ENCODE measurements at regions of chr19 and their contacts with region 1.

Region 1: DNA sequence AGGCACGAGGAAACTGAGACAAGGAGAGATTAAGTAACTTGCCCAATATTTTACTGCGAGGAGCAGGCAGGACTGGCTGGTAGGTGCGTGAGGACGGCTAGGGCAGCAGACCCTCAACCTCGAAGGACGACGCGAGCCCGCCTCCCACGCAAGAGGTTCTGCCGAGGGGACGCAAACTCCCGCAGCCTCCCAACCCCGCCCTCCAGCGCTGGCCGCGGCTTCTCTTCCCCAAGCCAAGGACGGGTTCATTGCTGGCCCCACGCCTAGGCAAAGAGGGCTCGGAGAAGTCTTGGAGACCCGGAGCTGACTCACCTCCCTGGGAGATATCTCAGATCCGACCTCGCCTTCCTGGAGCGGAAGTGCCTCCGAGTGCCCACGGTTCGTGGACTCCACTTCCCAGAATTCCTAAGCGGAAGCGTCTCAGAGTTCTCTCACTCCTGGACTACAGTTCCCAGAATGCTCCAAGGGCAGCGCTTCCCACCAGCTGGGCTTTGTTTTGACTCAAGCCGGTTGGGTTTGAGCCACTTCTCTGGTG is at the start of gene ZNF235:
- DNase-seq: peak; percentile 89 to 96 (median 92)
- ATAC-seq: peak; percentile 99 to 100 (median 100)
- H3K4me3 ChIP-seq: peak within 1 kb of the TSS; percentile 34 to 91 (median 72)
- H3K27ac ChIP-seq: peak within 1 kb of the TSS in 11 of 12 donors; percentile 48 to 87 (median 74)
- H3K4me1 ChIP-seq: peaks cover 0 to 18% (median 9%) of the 10 kb centered on the region in 12 donors
- H3K27me3 ChIP-seq: no peaks in the 10 kb centered on the region
- CTCF ChIP-seq: no peak
- POLR2A ChIP-seq: peak in 1 of 2 donors; percentile 64
- total RNA-seq, gene ZNF235: 1.9 to 6.3 (median 4.1) TPM

Region 2: DNA sequence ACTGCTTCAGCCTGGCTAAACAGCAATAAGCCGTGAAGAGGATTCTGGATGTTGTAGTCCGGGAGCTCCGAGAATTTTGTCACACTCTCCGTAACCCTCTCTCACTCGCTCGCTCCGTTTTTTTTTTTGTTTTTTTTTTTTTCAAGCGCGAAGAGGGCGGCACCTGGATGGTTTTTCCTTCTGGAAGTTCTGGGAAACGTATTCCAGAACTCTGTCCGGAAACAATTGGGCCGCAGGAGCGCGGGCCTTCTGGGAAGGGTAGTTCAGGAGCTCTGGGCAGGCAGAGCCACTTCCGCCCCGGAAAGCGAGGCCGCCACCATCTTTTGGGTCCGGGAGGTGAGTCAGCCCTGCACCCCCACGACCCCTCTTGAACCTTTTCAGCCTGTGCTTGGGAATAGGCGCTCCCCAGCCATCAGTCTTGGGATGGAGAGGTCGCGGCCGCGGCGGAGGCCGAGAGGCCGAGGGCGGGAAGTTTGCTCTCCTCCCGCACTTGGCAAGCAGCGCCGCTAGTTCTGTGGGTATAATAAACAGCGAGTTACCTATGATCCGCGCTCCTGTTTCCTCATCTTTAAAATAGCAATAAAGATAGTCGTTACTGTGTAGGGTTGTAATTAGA is 92.4 kb before region 1 on chr19 and contains the start of gene ZNF227:
- intact Hi-C with region 1: loop called in 3 of 10 experiments (anchors 2 to 10 kb)
- DNase-seq: peak; percentile 92 to 96 (median 95)
- ATAC-seq: peak; percentile 96 to 98 (median 98)
- H3K4me3 ChIP-seq: peak within 1 kb of the TSS; percentile 47 to 95 (median 76)
- H3K27ac ChIP-seq: peak within 1 kb of the TSS; percentile 66 to 92 (median 85)
- H3K4me1 ChIP-seq: peaks cover 0 to 27% (median 18%) of the 10 kb centered on the region in 12 donors
- H3K27me3 ChIP-seq: no peaks in the 10 kb centered on the region
- CTCF ChIP-seq: no peak
- POLR2A ChIP-seq: peak in 1 of 2 donors; percentile 53
- total RNA-seq, gene ZNF227: 4.7 to 20.5 (median 11.0) TPM

Region 3: GRCh38 chr19:44345959-44346358 is 41.2 kb after region 1 on chr19:
- intact Hi-C with region 1: loop called in 3 of 10 experiments (anchors 5 to 10 kb)
- DNase-seq: no peak
- ATAC-seq: peak in 1 of 4 donors; percentile 20
- H3K4me3 ChIP-seq: no peak overlapping the region
- H3K27ac ChIP-seq: no peak overlapping the region
- H3K4me1 ChIP-seq: peaks cover 0 to 10% (median 0%) of the 10 kb centered on the region in 12 donors
- H3K27me3 ChIP-seq: no peaks in the 10 kb centered on the region
- CTCF ChIP-seq: no peak
- POLR2A ChIP-seq: no peak

Region 4: DNA sequence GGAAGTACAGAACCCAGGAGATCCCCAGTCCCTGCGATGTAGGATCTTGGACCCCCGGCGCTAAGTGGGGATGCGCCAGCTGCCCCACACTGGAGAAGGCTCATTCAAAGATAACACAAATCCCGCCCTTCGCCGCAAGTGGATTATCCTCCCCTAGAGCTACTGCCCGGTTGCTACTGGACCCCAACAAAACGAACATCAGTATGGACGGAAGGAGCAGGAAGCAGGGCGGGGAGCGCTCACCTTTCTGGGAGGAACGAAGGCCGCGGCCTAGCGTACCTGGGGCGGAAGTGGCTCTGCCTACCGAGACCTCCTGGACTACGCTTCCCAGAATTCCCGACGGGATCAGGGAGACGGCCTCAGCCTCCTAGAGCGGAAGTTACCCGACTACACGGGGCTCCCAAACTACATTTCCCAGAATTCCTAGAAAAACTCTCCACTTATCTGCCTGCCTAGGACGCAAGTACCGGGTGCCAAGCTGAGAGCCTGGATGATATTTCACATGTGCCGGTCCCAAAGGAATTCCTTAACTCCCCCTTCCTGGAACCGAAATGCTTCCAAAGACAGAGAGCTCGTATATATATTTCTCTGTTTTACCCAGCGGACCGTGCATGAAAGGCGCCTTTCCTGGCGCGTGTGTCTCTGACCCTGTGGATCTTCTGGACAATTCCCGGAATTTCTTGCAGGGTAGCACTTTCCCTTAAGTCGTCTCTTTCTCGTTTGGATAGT is 51.8 kb after region 1 on chr19 and contains the start of gene ZNF112:
- intact Hi-C with region 1: loop called in 4 of 10 experiments (anchors 5 to 10 kb)
- DNase-seq: peak; percentile 86 to 92 (median 91)
- ATAC-seq: peak; percentile 100
- H3K4me3 ChIP-seq: peak within 1 kb of the TSS; percentile 41 to 97 (median 69)
- H3K27ac ChIP-seq: peak within 1 kb of the TSS in 9 of 12 donors; percentile 37 to 76 (median 63)
- H3K4me1 ChIP-seq: peaks cover 0 to 15% (median 7%) of the 10 kb centered on the region in 12 donors
- H3K27me3 ChIP-seq: no peaks in the 10 kb centered on the region
- CTCF ChIP-seq: no peak
- POLR2A ChIP-seq: peak in 1 of 2 donors; percentile 40
- total RNA-seq, gene ZNF112: 3.1 to 9.0 (median 5.5) TPM

Region 5: GRCh38 chr19:44374789-44375188 is 70.1 kb after region 1 on chr19:
- intact Hi-C with region 1: no loop called
- DNase-seq: no peak
- ATAC-seq: no peak
- H3K4me3 ChIP-seq: no peak overlapping the region
- H3K27ac ChIP-seq: no peak overlapping the region
- H3K4me1 ChIP-seq: no peaks in the 10 kb centered on the region
- H3K27me3 ChIP-seq: no peaks in the 10 kb centered on the region
- CTCF ChIP-seq: no peak
- POLR2A ChIP-seq: no peak

Measured in heart left ventricle (tissue), 16 donors.